Mammary epithelial cell (primary cell): ENCODE measurements at regions of chr1 and their contacts with region 1.

Region 1: GRCh38 chr1:1307908-1308755 is at the starts of genes ACAP3 and PUSL1:
- DNase-seq: peak; percentile 94
- H3K4me3 ChIP-seq: peak within 1 kb of the TSS; percentile 77 to 85 (median 83)
- H3K27ac ChIP-seq: peak within 1 kb of the TSS; percentile 40
- H3K4me1 ChIP-seq: peaks cover 59% of the 10 kb centered on the region
- H3K27me3 ChIP-seq: no peaks in the 10 kb centered on the region
- CTCF ChIP-seq: no peak
- total RNA-seq, gene ACAP3: 16.7 to 32.3 TPM
- total RNA-seq, gene PUSL1: 21.5 to 23.6 TPM

Region 2: GRCh38 chr1:1324521-1325287 is 16.6 kb after region 1 on chr1 and contains the starts of genes CPTP and INTS11:
- CTCF ChIA-PET with region 1: no interaction called
- dilution Hi-C with region 1: no loop called
- in situ Hi-C with region 1: no loop called
- intact Hi-C with region 1: loop called (anchors 2 kb)
- DNase-seq: peak; percentile 86
- H3K4me3 ChIP-seq: peak within 1 kb of the TSS; percentile 81 to 96 (median 92)
- H3K27ac ChIP-seq: peak within 1 kb of the TSS; percentile 67
- H3K4me1 ChIP-seq: peaks cover 22% of the 10 kb centered on the region
- H3K27me3 ChIP-seq: no peaks in the 10 kb centered on the region
- CTCF ChIP-seq: no peak
- total RNA-seq, gene CPTP: 12.0 to 25.0 TPM
- total RNA-seq, gene INTS11: 46.3 to 107 TPM

Region 3: GRCh38 chr1:1507305-1507704 is 199.2 kb after region 1 on chr1:
- CTCF ChIA-PET with region 1: no interaction called
- dilution Hi-C with region 1: no loop called
- in situ Hi-C with region 1: no loop called
- intact Hi-C with region 1: loop called (anchors 1 kb)
- DNase-seq: no peak
- H3K4me3 ChIP-seq: no peak overlapping the region
- H3K27ac ChIP-seq: no peak overlapping the region
- H3K4me1 ChIP-seq: peaks cover 16% of the 10 kb centered on the region
- H3K27me3 ChIP-seq: no peaks in the 10 kb centered on the region
- CTCF ChIP-seq: no peak

Region 4: GRCh38 chr1:1599030-1599919 is 291.1 kb after region 1 on chr1:
- CTCF ChIA-PET with region 1: no interaction called
- dilution Hi-C with region 1: no loop called
- in situ Hi-C with region 1: no loop called
- intact Hi-C with region 1: no loop called
- DNase-seq: peak; percentile 32
- H3K4me3 ChIP-seq: peak overlapping the region in 2 of 3 experiments; percentile 14 to 38
- H3K27ac ChIP-seq: no peak overlapping the region
- H3K4me1 ChIP-seq: peaks cover 12% of the 10 kb centered on the region
- H3K27me3 ChIP-seq: no peaks in the 10 kb centered on the region
- CTCF ChIP-seq: no peak